HepG2 (cell line): ENCODE measurements at regions of chr10 and their contacts with region 1.

Region 1: DNA sequence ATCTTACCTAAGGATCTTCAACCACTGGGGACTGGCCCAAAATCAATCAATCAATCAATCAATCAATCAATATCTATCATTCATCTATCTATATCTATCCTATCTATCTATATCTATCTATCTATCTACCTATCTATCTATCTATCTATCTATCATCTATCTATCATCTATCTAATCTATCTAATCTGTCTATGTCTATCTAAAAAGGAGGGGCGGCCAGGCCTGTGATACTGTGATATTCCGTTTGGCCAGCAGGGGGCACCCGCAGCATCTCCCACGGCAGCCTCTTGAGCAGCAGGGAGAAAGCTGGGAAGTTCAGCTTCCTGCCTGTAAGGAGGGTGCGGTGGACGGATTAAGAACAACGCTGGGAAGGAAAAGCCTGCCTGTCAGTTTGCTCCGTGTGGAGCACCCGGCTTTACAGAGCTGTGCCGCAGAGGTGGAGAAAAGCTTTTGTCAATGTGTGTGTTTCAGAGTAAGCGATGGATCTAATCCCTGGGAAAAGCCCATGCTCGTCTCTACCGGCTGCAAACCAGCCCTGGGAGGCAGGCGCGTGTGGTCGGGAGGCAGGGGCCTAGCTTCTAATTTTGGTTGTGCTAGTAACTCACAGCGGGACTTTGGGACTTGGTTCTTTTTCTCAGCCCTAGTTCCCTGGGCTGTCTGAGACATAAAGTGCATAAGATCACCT is 125.0 kb downstream of the SH2D4B start:
- DNase-seq: peak; percentile 43
- ATAC-seq: peak; percentile 86
- H3K4me3 ChIP-seq: peak overlapping the region; percentile 19 to 69 (median 39); a peak in 4 of 6 replicates
- H3K27ac ChIP-seq: no peak overlapping the region
- H3K4me1 ChIP-seq: peaks cover 19% of the 10 kb centered on the region
- H3K27me3 ChIP-seq: peaks cover 0 to 2% of the 10 kb centered on the region in 2 experiments; a peak in 2 of 5 replicates
- CTCF ChIP-seq: peak; percentile 84
- EP300 ChIP-seq: no peak
- POLR2A ChIP-seq: no peak
- RAD21 ChIP-seq: 0 out of 2 replicates have a peak, but pooled peaks have one; percentile 26

Region 2: GRCh38 chr10:80599424-80599847 is 63.3 kb before region 1 on chr10:
- CTCF ChIA-PET with region 1: no interaction called
- POLR2A ChIA-PET with region 1: no interaction called
- in situ Hi-C with region 1: no loop called
- intact Hi-C with region 1: no loop called
- DNase-seq: peak; percentile 20
- ATAC-seq: peak; percentile 88
- H3K4me3 ChIP-seq: no peak overlapping the region
- H3K27ac ChIP-seq: no peak overlapping the region
- H3K4me1 ChIP-seq: no peaks in the 10 kb centered on the region
- H3K27me3 ChIP-seq: peaks cover 0 to 3% of the 10 kb centered on the region in 2 experiments; a peak in 2 of 5 replicates
- CTCF ChIP-seq: peak; percentile 79
- EP300 ChIP-seq: no peak
- POLR2A ChIP-seq: no peak
- RAD21 ChIP-seq: no peak

Region 3: DNA sequence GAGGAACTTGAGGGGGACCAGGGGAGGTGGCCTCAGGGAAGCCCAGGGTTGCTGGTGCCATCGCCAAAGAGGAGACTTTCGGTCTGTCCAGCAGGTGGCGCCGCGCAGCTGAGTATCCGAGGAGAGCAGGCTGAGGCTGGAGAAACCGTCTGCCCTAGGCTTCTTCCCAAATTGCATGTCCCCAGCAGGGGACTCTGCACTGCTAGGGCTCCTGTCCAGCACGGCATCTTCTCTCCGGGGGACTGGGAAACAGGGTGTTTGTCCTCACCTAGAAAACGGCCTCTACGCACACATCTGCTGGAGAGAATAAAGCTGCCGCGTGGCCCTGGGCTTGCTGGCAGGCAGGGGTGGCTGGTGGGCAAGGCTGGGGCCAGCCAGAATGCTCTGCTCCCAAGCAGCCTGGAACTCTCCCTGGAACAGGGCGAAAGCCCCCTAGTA is 36.9 kb after region 1 on chr10:
- CTCF ChIA-PET with region 1: interaction called, 3 read pairs
- POLR2A ChIA-PET with region 1: no interaction called
- in situ Hi-C with region 1: no loop called
- intact Hi-C with region 1: loop called (anchors 5 kb)
- DNase-seq: peak; percentile 46
- ATAC-seq: peak; percentile 97
- H3K4me3 ChIP-seq: no peak overlapping the region
- H3K27ac ChIP-seq: no peak overlapping the region
- H3K4me1 ChIP-seq: no peaks in the 10 kb centered on the region
- H3K27me3 ChIP-seq: no peaks in the 10 kb centered on the region; a peak in 1 of 5 replicates
- CTCF ChIP-seq: peak; percentile 91
- EP300 ChIP-seq: no peak
- POLR2A ChIP-seq: no peak
- RAD21 ChIP-seq: peak; percentile 71

Region 4: DNA sequence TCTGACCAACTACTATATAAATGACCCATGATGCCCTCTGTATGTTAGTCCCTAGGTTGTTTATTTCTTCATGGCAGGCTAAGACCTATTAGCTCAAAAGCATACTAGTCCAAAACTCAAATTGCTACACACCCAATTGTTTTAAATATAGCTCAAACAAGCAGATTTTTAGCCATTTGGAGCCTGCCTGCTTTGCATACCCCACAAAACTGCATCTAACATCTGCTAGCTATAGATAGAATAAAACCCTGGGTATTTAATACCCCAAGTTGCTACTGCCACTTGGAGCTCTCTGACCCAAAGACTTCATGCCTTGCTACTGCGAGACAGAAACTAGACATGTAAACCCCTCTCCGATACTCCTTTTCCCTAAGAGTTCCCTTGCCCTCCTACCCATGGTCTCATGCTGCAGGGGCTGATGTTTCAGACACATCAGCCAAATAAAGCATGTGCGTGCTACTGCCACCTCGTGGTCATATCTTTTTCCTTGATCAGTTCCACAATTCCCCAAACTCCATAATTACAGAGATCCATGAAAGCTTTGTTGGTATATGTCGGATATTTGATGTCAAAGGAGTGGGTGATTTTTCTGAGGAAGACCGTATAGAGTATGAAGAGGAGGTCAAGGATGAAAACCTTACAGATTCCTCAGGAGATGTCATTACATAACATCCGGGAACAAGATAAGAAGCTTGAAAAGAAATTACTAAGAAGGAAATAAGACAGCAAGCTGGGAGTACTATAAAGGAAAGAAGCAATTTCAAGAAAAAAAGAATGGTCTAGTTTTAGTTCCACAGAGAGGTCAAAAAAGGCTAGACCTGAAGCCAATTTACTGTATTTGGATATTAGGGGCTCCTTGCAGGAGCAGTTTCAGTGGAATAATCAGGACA is 261.6 kb after region 1 on chr10:
- CTCF ChIA-PET with region 1: interaction called, 27 read pairs
- POLR2A ChIA-PET with region 1: no interaction called
- in situ Hi-C with region 1: loop called (anchors 5 kb)
- intact Hi-C with region 1: loop called (anchors 1 kb)
- DNase-seq: peak; percentile 33
- ATAC-seq: peak; percentile 85
- H3K4me3 ChIP-seq: no peak overlapping the region
- H3K27ac ChIP-seq: no peak overlapping the region
- H3K4me1 ChIP-seq: no peaks in the 10 kb centered on the region
- H3K27me3 ChIP-seq: no peaks in the 10 kb centered on the region; a peak in 1 of 5 replicates
- CTCF ChIP-seq: peak; percentile 73
- EP300 ChIP-seq: no peak
- POLR2A ChIP-seq: no peak
- RAD21 ChIP-seq: 0 out of 2 replicates have a peak, but pooled peaks have one; percentile 20